Activated naive CD4-positive, alpha-beta T cell treated with anti-CD3 and anti-CD28 coated beads, Interleukin-2, amount 10 ng/mL, durations not matched to agents 7 days and 5 days (primary cell): ENCODE measurements at regions of chr12 and their contacts with region 1.

Region 1: GRCh38 chr12:49347384-49348237 is 923 bp downstream of the DNAJC22 start:
- DNase-seq: peak; percentile 83
- H3K4me3 Mint-ChIP-seq: peak overlapping the region; percentile 38
- H3K27ac Mint-ChIP-seq: no peak overlapping the region
- H3K4me1 Mint-ChIP-seq: peaks cover 41% of the 10 kb centered on the region
- H3K27me3 Mint-ChIP-seq: peaks cover 93% of the 10 kb centered on the region

Region 2: DNA sequence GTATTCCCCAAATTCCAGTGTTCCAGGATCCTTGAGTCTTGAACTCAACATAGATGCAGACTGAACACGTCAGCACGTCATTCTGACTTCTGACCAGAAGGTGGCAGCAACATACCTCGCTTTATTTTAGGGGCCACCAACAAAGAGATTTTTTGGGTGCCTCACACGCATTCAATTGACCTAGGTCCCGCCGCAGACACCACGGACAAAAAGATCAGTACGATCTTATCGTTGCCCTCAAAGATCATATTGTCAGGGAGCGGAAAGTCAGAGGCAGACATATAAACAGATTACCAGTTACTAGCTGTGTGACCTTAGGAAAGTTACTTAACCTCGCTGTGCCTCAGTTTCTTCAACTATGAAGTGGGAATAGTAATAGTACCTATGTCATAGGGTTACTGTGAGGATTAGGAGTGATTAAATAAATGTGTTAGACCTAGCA is 59.2 kb before region 1 on chr12:
- CTCF ChIA-PET with region 1: interaction called, 103 read pairs
- DNase-seq: peak; percentile 84
- H3K4me3 Mint-ChIP-seq: no peak overlapping the region
- H3K27ac Mint-ChIP-seq: no peak overlapping the region
- H3K4me1 Mint-ChIP-seq: peaks cover 2% of the 10 kb centered on the region
- H3K27me3 Mint-ChIP-seq: peaks cover 81% of the 10 kb centered on the region

Region 3: GRCh38 chr12:49296034-49296835 is 51.4 kb before region 1 on chr12:
- CTCF ChIA-PET with region 1: interaction called, 103 read pairs
- DNase-seq: peak; percentile 76
- H3K4me3 Mint-ChIP-seq: peak overlapping the region; percentile 37
- H3K27ac Mint-ChIP-seq: no peak overlapping the region
- H3K4me1 Mint-ChIP-seq: peaks cover 25% of the 10 kb centered on the region
- H3K27me3 Mint-ChIP-seq: peaks cover 96% of the 10 kb centered on the region

Region 4: GRCh38 chr12:49336645-49337584 is 10.7 kb before region 1 on chr12 and contains the start of gene C1QL4:
- CTCF ChIA-PET with region 1: interaction called, 30 read pairs
- DNase-seq: peak; percentile 91
- H3K4me3 Mint-ChIP-seq: peak within 1 kb of the TSS; percentile 55
- H3K27ac Mint-ChIP-seq: no peak within 1 kb of the TSS
- H3K4me1 Mint-ChIP-seq: peaks cover 23% of the 10 kb centered on the region
- H3K27me3 Mint-ChIP-seq: peaks cover 100% of the 10 kb centered on the region